Activated CD8-positive, alpha-beta T cell treated with anti-CD3 and anti-CD28 coated beads for 36 hours (primary cell): ENCODE measurements at regions of chr4 and their contacts with region 1.

Region 1: GRCh38 chr4:121192480-121192879 is 28.4 kb upstream of the TNIP3 start:
- DNase-seq: no peak
- ATAC-seq: peak; percentile 18
- H3K4me3 Mint-ChIP-seq: peak overlapping the region; percentile 31
- H3K27ac Mint-ChIP-seq: no peak overlapping the region
- H3K4me1 Mint-ChIP-seq: peaks cover 52% of the 10 kb centered on the region
- H3K27me3 Mint-ChIP-seq: no peaks in the 10 kb centered on the region
- CTCF ChIP-seq: peak; percentile 89

Region 2: DNA sequence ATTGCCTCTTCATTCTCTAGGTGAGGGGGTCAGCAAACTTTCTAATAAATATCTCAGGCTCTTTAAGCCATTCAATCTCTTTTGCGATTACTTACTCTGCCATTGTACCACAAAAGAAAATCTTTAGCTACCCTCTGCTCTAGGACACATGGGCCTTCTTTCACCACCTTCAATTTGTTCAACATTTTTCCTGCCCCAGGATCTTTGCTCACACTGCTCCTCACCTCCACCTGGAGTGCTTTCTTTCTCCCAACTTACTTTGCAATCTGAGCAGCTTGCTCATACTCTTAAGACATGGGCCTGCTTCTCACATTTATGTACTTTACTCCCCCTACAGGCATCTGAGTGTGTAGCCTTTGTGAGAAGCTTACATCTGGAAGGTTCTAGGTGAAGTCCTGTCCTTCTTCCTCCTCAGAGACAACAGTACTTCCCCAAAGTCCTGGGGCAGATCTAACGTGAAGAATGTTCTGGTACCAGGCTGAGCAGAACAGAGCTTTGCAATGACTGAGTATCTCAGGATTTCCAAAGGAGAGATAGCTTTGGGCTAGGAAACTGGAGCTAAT is 215.0 kb before region 1 on chr4:
- CTCF ChIA-PET with region 1: no interaction called
- POLR2A ChIA-PET with region 1: no interaction called
- intact Hi-C with region 1: no loop called
- DNase-seq: peak; percentile 26
- ATAC-seq: peak; percentile 67
- H3K4me3 Mint-ChIP-seq: no peak overlapping the region
- H3K27ac Mint-ChIP-seq: no peak overlapping the region
- H3K4me1 Mint-ChIP-seq: peaks cover 2% of the 10 kb centered on the region
- H3K27me3 Mint-ChIP-seq: no peaks in the 10 kb centered on the region
- CTCF ChIP-seq: peak; percentile 59

Region 3: DNA sequence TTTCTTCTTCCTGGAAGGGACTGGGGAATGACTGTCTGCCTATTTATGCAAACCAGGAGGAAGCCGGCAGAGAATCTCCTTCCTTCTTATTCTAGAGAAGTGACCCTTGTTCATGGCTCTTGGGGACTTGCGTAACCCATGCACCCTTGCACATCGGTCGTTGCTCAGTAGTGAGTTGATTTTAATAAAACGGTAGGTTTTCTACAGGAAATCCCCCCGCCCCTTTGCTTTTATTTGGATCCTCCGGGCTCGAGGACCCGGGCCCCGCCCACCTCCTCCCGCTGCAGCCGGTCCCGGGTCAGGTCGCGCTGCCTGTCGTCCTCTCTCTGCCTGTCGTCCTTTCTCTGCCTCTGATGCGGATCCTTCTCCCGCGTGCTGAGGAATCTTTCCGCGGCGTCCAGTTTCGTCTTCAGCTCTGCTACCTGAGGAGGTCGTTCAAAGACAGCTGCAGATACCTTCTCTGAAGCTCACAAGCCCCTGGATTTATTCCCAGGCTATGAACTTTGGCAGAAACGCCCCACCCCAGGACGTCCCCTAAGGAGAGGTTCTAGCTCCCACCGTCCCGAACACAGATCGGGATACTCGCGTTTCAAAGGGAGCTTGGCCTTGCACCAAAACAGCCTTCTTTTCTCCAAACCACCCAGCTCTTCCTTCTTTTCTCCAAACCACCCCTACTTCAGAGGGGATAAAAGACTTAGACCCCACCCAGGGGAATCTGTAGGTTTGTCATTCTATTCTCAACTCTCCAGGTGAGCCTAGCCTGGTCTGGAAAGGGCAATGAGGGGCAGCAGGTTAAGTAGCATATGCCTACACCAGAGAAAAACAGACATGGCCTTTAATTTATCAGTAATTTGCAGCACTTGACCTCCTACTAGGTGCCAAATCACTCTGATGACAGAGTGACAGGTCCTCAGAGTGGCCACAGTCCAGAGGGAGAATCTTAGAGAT is 35.4 kb before region 1 on chr4:
- CTCF ChIA-PET with region 1: interaction called, 30 read pairs
- POLR2A ChIA-PET with region 1: no interaction called
- intact Hi-C with region 1: loop called (anchors 5 kb)
- DNase-seq: peak; percentile 48
- ATAC-seq: peak; percentile 52
- H3K4me3 Mint-ChIP-seq: peak overlapping the region; percentile 81
- H3K27ac Mint-ChIP-seq: peak overlapping the region; percentile 58
- H3K4me1 Mint-ChIP-seq: peaks cover 44% of the 10 kb centered on the region
- H3K27me3 Mint-ChIP-seq: no peaks in the 10 kb centered on the region
- CTCF ChIP-seq: no peak

Region 4: GRCh38 chr4:121209171-121209570 is 16.7 kb after region 1 on chr4:
- CTCF ChIA-PET with region 1: interaction called, 20 read pairs
- POLR2A ChIA-PET with region 1: no interaction called
- intact Hi-C with region 1: no loop called
- DNase-seq: no peak
- ATAC-seq: no peak
- H3K4me3 Mint-ChIP-seq: no peak overlapping the region
- H3K27ac Mint-ChIP-seq: no peak overlapping the region
- H3K4me1 Mint-ChIP-seq: peaks cover 8% of the 10 kb centered on the region
- H3K27me3 Mint-ChIP-seq: no peaks in the 10 kb centered on the region
- CTCF ChIP-seq: no peak

Region 5: DNA sequence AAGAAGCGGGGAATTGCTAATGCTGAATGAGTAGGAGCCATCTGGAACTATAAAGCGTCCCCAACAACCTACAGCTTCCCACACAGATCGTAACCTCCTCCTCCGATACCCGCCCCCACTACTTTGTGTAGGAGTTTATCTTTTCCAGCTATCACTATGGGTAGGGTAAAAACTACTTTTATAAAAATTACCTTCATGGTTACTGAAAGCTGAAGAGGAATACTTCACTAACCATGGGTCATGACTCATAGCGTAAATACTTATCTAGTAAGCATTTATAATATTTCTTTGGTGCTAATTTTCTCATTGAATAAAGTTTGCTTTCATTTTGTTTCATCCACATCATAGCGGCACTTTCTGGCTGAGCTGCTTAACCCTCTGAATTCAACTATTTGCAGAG is 51.0 kb after region 1 on chr4:
- CTCF ChIA-PET with region 1: interaction called, 155 read pairs
- POLR2A ChIA-PET with region 1: no interaction called
- intact Hi-C with region 1: no loop called
- DNase-seq: no peak
- ATAC-seq: peak; percentile 67
- H3K4me3 Mint-ChIP-seq: peak overlapping the region; percentile 8
- H3K27ac Mint-ChIP-seq: no peak overlapping the region
- H3K4me1 Mint-ChIP-seq: peaks cover 16% of the 10 kb centered on the region
- H3K27me3 Mint-ChIP-seq: no peaks in the 10 kb centered on the region
- CTCF ChIP-seq: no peak

Region 6: DNA sequence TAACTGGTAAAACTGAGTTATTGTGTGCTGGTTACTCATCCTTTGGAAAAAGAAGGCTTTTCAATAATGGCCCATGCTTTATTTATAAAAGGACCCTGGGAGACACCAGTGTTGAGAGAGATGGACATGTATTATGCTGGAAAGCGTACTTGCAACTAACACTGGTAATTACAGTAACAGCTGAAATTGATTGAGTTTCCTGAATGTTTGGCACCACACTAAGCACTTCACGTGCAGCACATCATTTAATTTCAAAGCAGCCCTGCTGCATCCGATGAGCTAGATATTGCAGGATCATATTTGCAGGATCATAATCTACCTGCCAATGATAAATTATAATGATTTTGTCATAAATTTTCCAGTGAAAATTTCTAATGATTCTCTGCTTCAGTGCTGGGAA is 106.9 kb after region 1 on chr4:
- CTCF ChIA-PET with region 1: interaction called, 31 read pairs
- POLR2A ChIA-PET with region 1: no interaction called
- intact Hi-C with region 1: no loop called
- DNase-seq: no peak
- ATAC-seq: no peak
- H3K4me3 Mint-ChIP-seq: no peak overlapping the region
- H3K27ac Mint-ChIP-seq: no peak overlapping the region
- H3K4me1 Mint-ChIP-seq: no peaks in the 10 kb centered on the region
- H3K27me3 Mint-ChIP-seq: no peaks in the 10 kb centered on the region
- CTCF ChIP-seq: no peak